ENCODE measurements at regions of chr11 and their contacts with region 1.

Region 1: GRCh38 chr11:15988693-15989231 is 367.6 kb downstream of the SOX6 start:
- DNase-seq: peak; percentile 55
- ATAC-seq: peak; percentile 95
- H3K4me3 Mint-ChIP-seq: peak overlapping the region; percentile 42
- H3K27ac Mint-ChIP-seq: no peak overlapping the region
- H3K4me1 Mint-ChIP-seq: peaks cover 8% of the 10 kb centered on the region
- H3K27me3 Mint-ChIP-seq: peaks cover 47% of the 10 kb centered on the region
- CTCF ChIP-seq: peak; percentile 77

Region 2: GRCh38 chr11:15826826-15827225 is 161.9 kb before region 1 on chr11:
- CTCF ChIA-PET with region 1: interaction called, 10 read pairs
- POLR2A ChIA-PET with region 1: no interaction called
- DNase-seq: peak; percentile 93
- ATAC-seq: peak; percentile 98
- H3K4me3 Mint-ChIP-seq: no peak overlapping the region
- H3K27ac Mint-ChIP-seq: no peak overlapping the region
- H3K4me1 Mint-ChIP-seq: peaks cover 29% of the 10 kb centered on the region
- H3K27me3 Mint-ChIP-seq: no peaks in the 10 kb centered on the region; the same call in 1 of the 2 replicates
- CTCF ChIP-seq: peak; percentile 85

Region 3: DNA sequence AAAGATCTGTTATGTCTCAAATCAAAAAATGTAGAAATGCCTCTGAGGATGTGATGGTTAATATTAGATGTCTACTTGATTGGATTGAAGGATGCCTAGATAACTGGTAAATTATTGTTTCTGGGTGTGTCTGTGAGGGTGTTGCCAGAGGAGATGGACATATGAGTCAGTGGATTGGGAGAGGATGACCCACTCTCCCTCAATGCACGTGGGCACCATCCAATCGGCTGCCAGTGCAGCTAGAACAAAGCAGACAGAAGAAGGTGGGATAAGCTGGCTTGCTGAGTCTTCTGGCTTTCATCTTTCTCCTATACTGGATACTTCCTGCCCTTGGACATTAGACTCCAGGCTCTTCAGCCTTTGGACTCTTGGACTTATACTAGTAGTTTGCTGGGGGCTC is 62.7 kb before region 1 on chr11:
- CTCF ChIA-PET with region 1: no interaction called
- POLR2A ChIA-PET with region 1: no interaction called
- DNase-seq: no peak
- ATAC-seq: no peak
- H3K4me3 Mint-ChIP-seq: no peak overlapping the region
- H3K27ac Mint-ChIP-seq: no peak overlapping the region
- H3K4me1 Mint-ChIP-seq: no peaks in the 10 kb centered on the region
- H3K27me3 Mint-ChIP-seq: no peaks in the 10 kb centered on the region
- CTCF ChIP-seq: no peak

Region 4: GRCh38 chr11:15941201-15941770 is 47.5 kb before region 1 on chr11:
- CTCF ChIA-PET with region 1: interaction called, 19 read pairs
- POLR2A ChIA-PET with region 1: no interaction called
- DNase-seq: peak; percentile 82
- ATAC-seq: peak; percentile 87
- H3K4me3 Mint-ChIP-seq: no peak overlapping the region
- H3K27ac Mint-ChIP-seq: no peak overlapping the region
- H3K4me1 Mint-ChIP-seq: peaks cover 3% of the 10 kb centered on the region
- H3K27me3 Mint-ChIP-seq: peaks cover 29% of the 10 kb centered on the region
- CTCF ChIP-seq: peak; percentile 99

Measured in WTC11 (cell line).